Caco-2 (cell line): ENCODE measurements at regions of chr5 and their contacts with region 1.

Region 1: DNA sequence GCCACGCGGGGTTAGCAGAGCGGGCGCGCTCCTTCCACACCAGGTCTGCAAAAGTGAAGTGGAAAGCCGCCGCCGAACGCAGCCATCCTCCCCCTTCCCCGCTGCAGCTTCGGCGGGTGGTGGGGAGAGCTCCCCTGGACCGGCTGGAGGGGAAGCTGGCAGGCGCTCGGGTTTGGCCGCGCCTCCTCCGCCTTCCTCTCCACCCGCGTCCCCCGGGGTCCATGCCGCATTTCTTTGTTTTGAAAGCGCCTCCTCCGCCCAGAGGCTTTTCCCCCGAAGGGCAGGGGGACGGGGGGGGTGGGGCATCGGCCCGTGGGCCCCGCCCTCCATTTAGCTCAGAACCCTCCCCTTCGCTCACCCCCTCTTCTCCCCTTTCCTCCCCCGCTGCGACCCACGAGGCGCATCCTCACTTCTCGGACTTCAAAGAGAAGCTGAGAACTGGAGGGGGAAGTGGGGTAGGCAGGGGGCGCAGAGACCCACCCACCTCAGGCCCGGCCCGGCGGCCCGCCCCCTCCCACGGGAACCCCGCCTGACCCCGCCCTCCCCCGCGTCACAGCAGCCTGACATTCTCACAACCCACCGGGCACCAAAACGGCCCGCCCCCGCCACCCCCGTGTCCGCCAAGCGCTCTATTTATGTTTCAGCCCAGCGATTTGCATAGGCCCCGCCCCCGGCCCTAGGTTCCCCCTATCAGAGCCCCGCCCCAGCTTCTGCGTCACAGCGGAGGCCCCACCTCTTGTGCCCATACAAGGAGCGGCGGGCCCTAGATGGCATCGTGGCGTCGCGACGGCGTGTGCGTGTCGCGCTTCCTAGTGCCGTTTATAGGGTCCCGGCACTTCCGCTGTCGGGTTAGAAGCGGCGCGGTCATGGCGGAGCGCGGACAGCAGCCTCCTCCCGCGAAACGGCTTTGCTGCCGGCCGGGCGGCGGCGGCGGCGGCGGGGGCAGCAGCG is at the start of gene ZSWIM6:
- DNase-seq: peak; percentile 98 to 99
- H3K4me3 ChIP-seq: peak within 1 kb of the TSS; percentile 100
- H3K4me3 Mint-ChIP-seq: peak within 1 kb of the TSS; percentile 79
- H3K27ac Mint-ChIP-seq: peak within 1 kb of the TSS; percentile 93
- H3K4me1 ChIP-seq: no peaks in the 10 kb centered on the region
- H3K4me1 Mint-ChIP-seq: peaks cover 34% of the 10 kb centered on the region
- H3K27me3 ChIP-seq: no peaks in the 10 kb centered on the region
- H3K27me3 Mint-ChIP-seq: no peaks in the 10 kb centered on the region
- CTCF ChIP-seq: peak in 1 of 2 experiments; percentile 8
- total RNA-seq, gene ZSWIM6: 10.0 and 10.7 TPM in 2 replicates

Region 2: DNA sequence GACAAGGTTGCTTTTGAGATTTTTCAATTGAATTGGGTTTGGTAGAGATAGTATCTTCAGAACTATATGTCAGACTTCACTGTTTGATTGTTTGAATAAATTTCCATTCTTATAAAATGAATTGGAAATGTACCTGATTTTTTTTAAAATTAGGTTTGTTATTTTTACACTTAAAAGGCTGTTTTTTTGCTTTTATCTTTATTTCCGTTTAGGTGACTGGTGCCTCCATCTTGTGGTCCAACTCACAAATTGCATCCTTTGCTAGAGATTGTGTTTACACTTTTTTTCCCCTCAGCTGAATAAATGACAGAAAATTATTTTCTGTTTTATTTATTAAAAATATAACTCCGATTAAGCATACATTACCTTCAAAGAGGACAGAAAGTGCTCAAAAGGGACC is 371.1 kb before region 1 on chr5:
- CTCF ChIA-PET with region 1: interaction called, 3 read pairs
- POLR2A ChIA-PET with region 1: no interaction called
- intact Hi-C with region 1: loop called (anchors 10 kb)
- DNase-seq: no peak
- H3K4me3 ChIP-seq: no peak overlapping the region
- H3K4me3 Mint-ChIP-seq: no peak overlapping the region
- H3K27ac Mint-ChIP-seq: no peak overlapping the region
- H3K4me1 ChIP-seq: no peaks in the 10 kb centered on the region
- H3K4me1 Mint-ChIP-seq: no peaks in the 10 kb centered on the region
- H3K27me3 ChIP-seq: no peaks in the 10 kb centered on the region
- H3K27me3 Mint-ChIP-seq: no peaks in the 10 kb centered on the region
- CTCF ChIP-seq: peak; percentile 56 to 70

Region 3: DNA sequence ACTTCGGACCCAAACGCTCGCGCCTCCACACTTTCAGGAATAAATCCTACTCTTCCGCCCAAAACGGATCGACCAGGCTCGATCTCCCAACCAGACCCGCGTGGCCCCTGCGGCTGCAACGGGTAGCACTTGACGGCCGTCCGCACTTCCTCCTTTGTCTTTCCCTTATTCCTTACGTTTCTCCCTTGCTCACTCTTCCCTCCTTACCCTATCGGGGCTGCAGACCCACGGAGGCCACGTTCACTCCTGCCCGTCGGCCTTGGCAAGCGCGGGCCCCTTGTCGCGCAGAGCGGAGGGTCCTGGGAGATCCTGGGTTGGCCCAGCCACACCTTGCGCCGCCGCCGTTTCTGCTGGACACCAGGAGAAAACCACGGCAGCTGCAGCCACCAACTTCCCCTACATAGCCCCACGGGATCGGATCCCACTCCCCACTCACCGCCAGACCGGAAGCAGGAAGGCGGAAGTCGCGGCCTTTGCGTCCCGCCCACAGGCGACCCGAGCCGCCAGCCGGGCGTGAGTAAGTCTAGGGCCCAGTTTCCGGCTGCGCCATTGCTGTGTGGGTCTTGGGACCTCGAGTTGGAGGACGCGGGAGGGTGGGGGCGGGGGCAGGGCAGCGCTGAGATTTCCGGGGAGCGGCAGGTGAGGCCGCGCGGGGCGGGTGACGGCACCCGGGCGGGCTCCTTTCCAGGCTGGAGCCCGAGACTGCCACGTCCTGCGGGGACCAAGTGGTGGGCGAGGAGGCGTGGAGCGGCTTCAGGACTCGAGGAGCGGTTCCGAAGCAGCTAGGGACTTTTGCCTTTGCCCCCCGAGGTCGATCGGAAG is 169.5 kb before region 1 on chr5 and contains the start of gene SMIM15:
- CTCF ChIA-PET with region 1: no interaction called
- POLR2A ChIA-PET with region 1: interaction called, 8 read pairs
- intact Hi-C with region 1: loop called (anchors 1 kb)
- DNase-seq: peak; percentile 93 to 94
- H3K4me3 ChIP-seq: peak within 1 kb of the TSS; percentile 87
- H3K4me3 Mint-ChIP-seq: peak within 1 kb of the TSS; percentile 90
- H3K27ac Mint-ChIP-seq: peak within 1 kb of the TSS; percentile 97
- H3K4me1 ChIP-seq: peaks cover 13% of the 10 kb centered on the region; the same call in 1 of the 2 replicates
- H3K4me1 Mint-ChIP-seq: peaks cover 8% of the 10 kb centered on the region
- H3K27me3 ChIP-seq: no peaks in the 10 kb centered on the region
- H3K27me3 Mint-ChIP-seq: no peaks in the 10 kb centered on the region
- CTCF ChIP-seq: no peak
- total RNA-seq, gene SMIM15: 57.7 and 59.7 TPM in 2 replicates

Region 4: DNA sequence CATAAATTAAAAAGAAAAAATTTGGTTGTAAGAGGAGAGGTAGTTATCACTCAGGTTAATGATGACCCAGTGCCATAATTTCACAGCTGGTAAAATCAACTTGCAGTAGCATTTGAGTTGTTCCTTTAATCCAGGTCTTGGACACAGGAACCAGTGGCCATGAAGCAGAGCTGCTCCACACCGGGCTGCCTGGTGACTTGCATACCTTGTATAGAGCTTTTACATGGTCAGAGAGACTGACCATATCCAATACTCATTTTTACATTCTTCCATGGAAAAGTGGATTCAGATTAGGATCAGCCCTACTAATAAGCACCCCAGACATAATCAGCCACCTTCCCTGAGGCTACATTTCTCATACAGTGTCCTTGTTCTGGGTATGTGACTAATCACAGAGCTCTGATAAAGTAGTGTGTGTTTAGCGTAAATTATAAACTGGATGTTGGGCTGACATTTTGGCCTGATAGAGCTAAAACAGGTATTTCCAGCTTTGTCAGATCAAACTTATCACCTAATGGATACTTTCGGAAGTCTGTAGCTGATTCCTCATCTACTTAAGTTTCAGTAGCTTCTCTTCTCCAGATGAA is 76.6 kb before region 1 on chr5:
- CTCF ChIA-PET with region 1: no interaction called
- POLR2A ChIA-PET with region 1: interaction called, 16 read pairs
- intact Hi-C with region 1: no loop called
- DNase-seq: peak; percentile 55 to 62
- H3K4me3 ChIP-seq: no peak overlapping the region
- H3K4me3 Mint-ChIP-seq: peak overlapping the region; percentile 34
- H3K27ac Mint-ChIP-seq: peak overlapping the region; percentile 30
- H3K4me1 ChIP-seq: peaks cover 32% of the 10 kb centered on the region
- H3K4me1 Mint-ChIP-seq: peaks cover 16% of the 10 kb centered on the region
- H3K27me3 ChIP-seq: no peaks in the 10 kb centered on the region
- H3K27me3 Mint-ChIP-seq: no peaks in the 10 kb centered on the region
- CTCF ChIP-seq: no peak

Region 5: DNA sequence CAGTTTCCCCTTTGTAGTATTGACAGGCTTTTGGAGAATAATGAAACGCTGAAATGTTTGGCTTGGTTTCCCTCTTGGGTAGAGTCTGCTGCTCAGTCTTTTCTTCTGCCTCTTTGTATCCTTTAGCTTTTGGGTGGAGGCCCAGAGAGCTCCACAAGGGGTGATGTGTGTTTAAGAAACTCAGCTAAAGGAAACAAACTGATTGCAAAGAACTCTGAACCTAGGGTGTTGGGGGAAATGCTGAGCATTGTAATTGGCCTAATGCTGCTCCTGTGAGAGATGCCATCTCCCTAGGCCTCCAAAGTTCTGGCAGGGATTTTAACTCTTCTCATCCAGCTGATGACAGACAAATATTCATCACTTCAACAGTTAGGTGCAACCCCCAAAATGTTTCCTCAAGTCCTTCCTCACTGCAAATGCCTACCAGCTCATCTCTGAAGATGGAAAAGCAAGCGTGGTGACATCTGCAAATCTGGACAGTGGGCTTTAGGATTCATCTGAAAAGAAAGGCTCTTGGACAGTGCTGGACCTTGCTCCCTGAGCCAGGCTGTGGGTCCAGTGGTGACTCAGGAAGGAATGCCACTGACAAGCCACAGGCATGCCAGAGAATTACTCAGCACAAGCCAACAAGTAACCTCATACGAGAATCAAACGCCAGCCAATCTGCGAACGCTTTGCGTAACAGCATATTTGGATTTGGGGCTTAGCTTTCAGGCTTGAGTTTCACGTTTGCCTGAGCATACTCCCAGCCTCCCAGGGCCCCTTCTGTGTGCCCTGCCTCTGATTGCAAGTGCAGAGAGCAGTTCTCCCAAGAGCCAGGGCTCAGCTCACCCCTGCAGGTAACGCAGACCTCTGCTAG is 30.1 kb before region 1 on chr5:
- CTCF ChIA-PET with region 1: interaction called, 5 read pairs
- POLR2A ChIA-PET with region 1: interaction called, 43 read pairs
- intact Hi-C with region 1: loop called (anchors 1 kb)
- DNase-seq: peak; percentile 89 to 93
- H3K4me3 ChIP-seq: no peak overlapping the region
- H3K4me3 Mint-ChIP-seq: peak overlapping the region; percentile 52
- H3K27ac Mint-ChIP-seq: peak overlapping the region; percentile 86
- H3K4me1 ChIP-seq: peaks cover 52% of the 10 kb centered on the region
- H3K4me1 Mint-ChIP-seq: peaks cover 34% of the 10 kb centered on the region
- H3K27me3 ChIP-seq: no peaks in the 10 kb centered on the region
- H3K27me3 Mint-ChIP-seq: no peaks in the 10 kb centered on the region
- CTCF ChIP-seq: no peak

Region 6: GRCh38 chr5:61408476-61409168 is 76.9 kb after region 1 on chr5:
- CTCF ChIA-PET with region 1: no interaction called
- POLR2A ChIA-PET with region 1: interaction called, 13 read pairs
- intact Hi-C with region 1: loop called (anchors 1 kb)
- DNase-seq: peak; percentile 97 to 98
- H3K4me3 ChIP-seq: peak overlapping the region; percentile 31
- H3K4me3 Mint-ChIP-seq: peak overlapping the region; percentile 84
- H3K27ac Mint-ChIP-seq: peak overlapping the region; percentile 85
- H3K4me1 ChIP-seq: peaks cover 18% of the 10 kb centered on the region
- H3K4me1 Mint-ChIP-seq: peaks cover 27% of the 10 kb centered on the region
- H3K27me3 ChIP-seq: no peaks in the 10 kb centered on the region
- H3K27me3 Mint-ChIP-seq: no peaks in the 10 kb centered on the region
- CTCF ChIP-seq: no peak